Dorsolateral prefrontal cortex (tissue), 120 donors: ENCODE measurements at regions of chr13 and their contacts with region 1.

Region 1: GRCh38 chr13:97411984-97412383 is 22.0 kb upstream of the RAP2A start:
- DNase-seq: no peak
- H3K4me3 ChIP-seq: no peak overlapping the region
- H3K27ac ChIP-seq: no peak overlapping the region
- H3K27me3 ChIP-seq: no peaks in the 10 kb centered on the region
- CTCF ChIP-seq: no peak

Region 2: GRCh38 chr13:97423300-97424045 is 11.5 kb after region 1 on chr13:
- intact Hi-C with region 1: loop called in 1 of 2 experiments (anchors 1 kb)
- DNase-seq: peak in 5 of 10 donors; percentile 33 to 59 (median 49)
- H3K4me3 ChIP-seq: peak overlapping the region in 24 of 59 donors; percentile 2 to 50 (median 30)
- H3K27ac ChIP-seq: peak overlapping the region in 57 of 59 donors; percentile 27 to 99 (median 71)
- H3K27me3 ChIP-seq: no peaks in the 10 kb centered on the region
- CTCF ChIP-seq: no peak

Region 3: GRCh38 chr13:97441368-97441767 is 29.4 kb after region 1 on chr13:
- intact Hi-C with region 1: no loop called
- DNase-seq: no peak
- H3K4me3 ChIP-seq: peak overlapping the region in 6 of 59 donors; percentile 2 to 23 (median 14)
- H3K27ac ChIP-seq: peak overlapping the region in 1 of 59 donors; percentile 33
- H3K27me3 ChIP-seq: no peaks in the 10 kb centered on the region
- CTCF ChIP-seq: no peak